GM18951 (cell line): ENCODE measurements at regions of chr6 and their contacts with region 1.

Region 1: GRCh38 chr6:34154668-34155447 is 9.0 kb upstream of the GRM4 start:
- POLR2A ChIP-seq: no peak

Region 2: DNA sequence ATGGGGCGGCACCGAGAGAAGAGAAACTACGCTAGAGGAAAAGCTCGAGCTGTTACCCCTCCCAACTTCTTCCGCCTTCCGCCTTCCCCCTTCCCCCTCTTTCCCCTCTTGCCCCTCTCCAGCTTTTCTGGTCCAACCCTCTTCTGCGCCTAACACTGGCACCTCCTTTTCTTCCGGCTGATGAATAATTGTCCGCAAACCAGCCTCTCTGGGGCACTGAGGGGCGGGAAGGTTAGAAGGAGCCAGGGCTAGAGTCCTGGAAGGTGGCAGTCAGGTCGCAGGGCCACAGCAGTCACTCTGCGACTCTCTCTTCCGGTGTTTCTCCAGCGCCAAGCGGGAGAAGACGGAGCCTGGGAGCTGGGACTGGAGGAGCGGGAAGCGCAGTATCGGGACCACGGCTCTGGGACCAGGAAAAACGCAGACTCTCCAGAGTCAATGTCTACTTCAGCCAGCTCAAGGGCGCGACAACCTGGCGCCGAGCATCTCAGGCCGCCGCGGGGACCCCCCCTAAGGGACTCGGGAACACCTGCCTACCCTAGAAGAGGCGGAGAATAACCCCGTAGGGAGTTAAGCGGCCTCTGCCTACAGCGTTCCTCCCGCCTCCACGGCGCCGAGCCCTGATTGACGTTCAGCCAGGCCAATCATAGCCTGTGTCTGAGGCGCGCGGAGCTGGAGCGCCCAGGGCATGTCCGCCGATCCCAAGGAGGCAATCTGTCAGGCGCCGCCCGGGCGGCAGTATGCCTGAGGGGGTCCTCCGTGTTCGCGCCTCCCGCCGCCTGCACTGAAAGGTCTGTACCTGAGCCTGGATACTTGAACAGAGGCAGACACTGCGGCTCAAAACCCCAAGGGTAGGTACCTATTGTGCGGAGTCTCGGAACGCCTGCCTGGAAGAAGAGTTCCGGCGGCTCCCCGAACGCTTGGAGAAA is 1260.5 kb before region 1 on chr6:
- in situ Hi-C with region 1: no loop called
- POLR2A ChIP-seq: peak; percentile 85

Region 3: GRCh38 chr6:33768644-33769120 is 386.2 kb before region 1 on chr6:
- in situ Hi-C with region 1: loop called (anchors 10 kb)
- POLR2A ChIP-seq: no peak

Region 4: GRCh38 chr6:34005901-34006531 is 148.8 kb before region 1 on chr6:
- in situ Hi-C with region 1: no loop called
- POLR2A ChIP-seq: no peak

Region 5: GRCh38 chr6:34055223-34055933 is 99.5 kb before region 1 on chr6:
- in situ Hi-C with region 1: loop called (anchors 10 kb)
- POLR2A ChIP-seq: no peak